Activated CD8-positive, alpha-beta T cell treated with anti-CD3 and anti-CD28 coated beads, Interleukin-2, amount 10 ng/mL, durations not matched to agents 7 days and 5 days (primary cell): ENCODE measurements at regions of chr10 and their contacts with region 1.

Region 1: GRCh38 chr10:69092959-69093850 is 5.3 kb downstream of the SRGN start:
- DNase-seq: peak; percentile 94
- ATAC-seq: peak; percentile 42
- H3K4me3 Mint-ChIP-seq: peak overlapping the region; percentile 20
- H3K27ac Mint-ChIP-seq: peak overlapping the region; percentile 79
- H3K4me1 Mint-ChIP-seq: peaks cover 69% of the 10 kb centered on the region
- H3K27me3 Mint-ChIP-seq: no peaks in the 10 kb centered on the region

Region 2: DNA sequence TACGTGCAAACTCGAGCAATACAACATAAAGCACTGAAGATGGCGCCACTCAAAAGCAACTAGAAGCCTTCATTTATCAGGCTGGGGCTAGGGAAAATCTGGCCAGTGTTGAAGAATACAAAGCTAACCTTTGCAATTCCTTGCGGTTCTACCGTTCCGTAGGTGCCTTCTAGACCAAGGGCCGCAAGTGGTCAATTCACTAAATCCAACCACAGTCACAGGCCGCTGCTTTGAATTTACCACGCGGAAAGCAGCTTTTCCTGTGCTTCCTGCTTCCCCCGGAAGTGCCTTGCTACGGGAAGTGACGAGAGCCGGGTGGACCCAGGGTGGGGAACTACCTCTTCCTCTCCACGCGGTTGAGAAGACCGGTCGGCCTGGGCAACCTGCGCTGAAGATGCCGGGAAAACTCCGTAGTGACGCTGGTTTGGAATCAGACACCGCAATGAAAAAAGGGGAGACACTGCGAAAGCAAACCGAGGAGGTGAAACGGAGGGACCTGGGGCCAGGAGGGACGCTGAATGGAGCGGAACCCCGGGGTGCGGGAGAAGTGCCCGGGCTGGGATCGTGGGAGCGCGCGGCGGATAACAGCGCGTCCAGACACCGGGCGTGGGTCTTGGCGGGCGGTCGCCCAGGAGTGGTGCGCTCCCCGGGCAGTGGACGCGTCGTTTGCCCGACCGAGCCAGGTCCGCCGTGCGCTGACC is 137.2 kb before region 1 on chr10 and contains the start of gene DDX21:
- CTCF ChIA-PET with region 1: interaction called, 34 read pairs
- POLR2A ChIA-PET with region 1: interaction called, 7 read pairs
- DNase-seq: peak; percentile 94
- ATAC-seq: peak; percentile 85
- H3K4me3 Mint-ChIP-seq: peak within 1 kb of the TSS; percentile 100
- H3K27ac Mint-ChIP-seq: peak within 1 kb of the TSS; percentile 100
- H3K4me1 Mint-ChIP-seq: peaks cover 31% of the 10 kb centered on the region
- H3K27me3 Mint-ChIP-seq: no peaks in the 10 kb centered on the region
- total RNA-seq, gene DDX21: 94.7 to 94.9 TPM

Region 3: GRCh38 chr10:68988530-68989316 is 104.5 kb before region 1 on chr10 and contains the start of gene KIFBP:
- CTCF ChIA-PET with region 1: interaction called, 17 read pairs
- POLR2A ChIA-PET with region 1: interaction called, 4 read pairs
- DNase-seq: peak; percentile 90
- ATAC-seq: peak; percentile 88
- H3K4me3 Mint-ChIP-seq: peak within 1 kb of the TSS; percentile 99
- H3K27ac Mint-ChIP-seq: peak within 1 kb of the TSS; percentile 97
- H3K4me1 Mint-ChIP-seq: peaks cover 46% of the 10 kb centered on the region
- H3K27me3 Mint-ChIP-seq: no peaks in the 10 kb centered on the region
- total RNA-seq, gene KIFBP: 13.7 to 16.5 TPM

Region 4: GRCh38 chr10:69045441-69046300 is 47.5 kb before region 1 on chr10:
- CTCF ChIA-PET with region 1: interaction called, 39 read pairs
- POLR2A ChIA-PET with region 1: interaction called, 49 read pairs
- DNase-seq: peak; percentile 41
- ATAC-seq: peak; percentile 75
- H3K4me3 Mint-ChIP-seq: peak overlapping the region; percentile 29
- H3K27ac Mint-ChIP-seq: peak overlapping the region; percentile 95
- H3K4me1 Mint-ChIP-seq: peaks cover 44% of the 10 kb centered on the region
- H3K27me3 Mint-ChIP-seq: no peaks in the 10 kb centered on the region

Region 5: GRCh38 chr10:69123747-69124562 is 30.8 kb after region 1 on chr10 and contains the start of gene VPS26A:
- CTCF ChIA-PET with region 1: interaction called, 11 read pairs
- POLR2A ChIA-PET with region 1: interaction called, 6 read pairs
- DNase-seq: peak; percentile 99
- ATAC-seq: peak; percentile 94
- H3K4me3 Mint-ChIP-seq: peak within 1 kb of the TSS; percentile 89
- H3K27ac Mint-ChIP-seq: peak within 1 kb of the TSS; percentile 95
- H3K4me1 Mint-ChIP-seq: peaks cover 29% of the 10 kb centered on the region
- H3K27me3 Mint-ChIP-seq: no peaks in the 10 kb centered on the region
- total RNA-seq, gene VPS26A: 53.6 to 61.9 TPM

Region 6: DNA sequence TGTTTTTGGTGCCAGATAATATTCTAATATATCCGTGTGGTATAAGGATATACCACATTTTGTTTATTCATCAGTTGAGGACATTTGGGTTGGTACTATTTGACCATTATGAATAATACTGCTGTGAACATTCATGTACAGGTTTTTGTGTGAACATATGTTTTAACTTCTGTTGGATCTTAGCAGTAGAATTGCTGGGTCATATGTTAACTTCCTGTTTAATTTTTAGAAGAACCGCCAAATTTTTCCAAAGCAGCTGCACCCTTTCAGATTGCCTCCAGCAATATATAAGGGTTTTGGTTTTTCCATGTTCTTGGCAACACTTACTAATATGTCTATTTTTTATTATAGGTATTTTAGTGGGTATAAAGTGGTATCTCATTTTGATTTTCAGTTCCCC is 53.6 kb after region 1 on chr10:
- CTCF ChIA-PET with region 1: no interaction called
- POLR2A ChIA-PET with region 1: no interaction called
- DNase-seq: no peak
- ATAC-seq: no peak
- H3K4me3 Mint-ChIP-seq: no peak overlapping the region
- H3K27ac Mint-ChIP-seq: no peak overlapping the region
- H3K4me1 Mint-ChIP-seq: peaks cover 20% of the 10 kb centered on the region
- H3K27me3 Mint-ChIP-seq: no peaks in the 10 kb centered on the region